Left cardiac atrium (tissue), 4 donors: ENCODE measurements at regions of chrX and their contacts with region 1.

Region 1: GRCh38 chrX:12894074-12895030 is 12.1 kb upstream of the TLR8 start:
- DNase-seq: peak; percentile 31
- ATAC-seq: no peak

Region 2: DNA sequence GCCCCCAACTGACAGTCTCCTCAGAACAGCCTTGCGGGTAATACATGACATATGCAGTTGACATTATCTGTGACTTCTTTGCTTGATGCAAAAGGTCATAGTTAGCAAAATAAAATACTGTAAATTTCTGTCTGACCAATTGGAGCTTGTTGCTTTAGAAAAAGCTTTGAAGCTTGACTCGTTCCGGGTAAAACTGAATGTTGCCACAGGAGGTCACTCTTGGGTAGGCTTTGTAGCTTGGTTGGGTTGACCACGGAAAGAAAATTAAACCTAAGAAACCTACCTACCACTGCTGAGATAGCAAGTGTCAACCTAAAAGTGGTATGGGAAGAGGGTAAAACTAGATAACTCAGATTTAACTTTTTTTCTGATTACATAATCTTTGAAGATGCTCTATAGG is 79.9 kb before region 1 on chrX:
- intact Hi-C with region 1: loop called in 1 of 2 experiments (anchors 5 kb)
- DNase-seq: no peak
- ATAC-seq: no peak